ENCODE measurements at regions of chr10 and their contacts with region 1.

Region 1: DNA sequence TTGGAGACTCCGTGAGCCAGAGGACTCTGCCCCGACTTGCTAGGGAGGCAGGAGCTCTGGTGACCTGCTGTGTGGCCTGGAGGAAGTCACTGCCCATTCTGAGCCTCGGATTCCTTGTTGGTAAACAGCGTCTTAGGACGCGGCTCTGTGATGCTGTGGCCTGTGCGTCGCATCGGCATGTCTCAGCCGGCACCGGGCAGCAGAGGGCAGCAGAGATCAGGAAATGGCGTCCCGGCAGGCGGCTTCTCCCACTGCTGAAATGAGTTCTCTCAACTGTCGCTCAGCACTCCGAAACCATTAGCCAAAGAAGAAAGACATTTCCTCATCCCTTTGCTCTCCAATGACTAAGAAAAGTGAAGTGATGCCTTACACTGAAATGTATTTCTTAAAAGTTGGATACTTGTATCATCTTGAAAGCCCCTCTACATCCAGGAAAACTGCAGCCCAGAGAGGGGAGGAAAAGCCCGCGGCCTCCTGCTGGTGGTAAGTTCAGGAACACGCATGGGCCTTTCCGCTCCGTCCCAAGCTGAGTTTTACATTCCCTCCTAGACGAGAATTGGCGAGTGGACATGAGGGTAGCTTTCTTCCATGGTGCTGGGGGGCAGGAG is 91.7 kb downstream of the WDR11 start:
- DNase-seq: peak; percentile 44 to 57
- H3K4me3 ChIP-seq: no peak overlapping the region
- H3K27ac ChIP-seq: no peak overlapping the region
- H3K4me1 ChIP-seq: no peaks in the 10 kb centered on the region
- H3K27me3 ChIP-seq: peaks cover 38% of the 10 kb centered on the region
- CTCF ChIP-seq: peak; percentile 80

Region 2: DNA sequence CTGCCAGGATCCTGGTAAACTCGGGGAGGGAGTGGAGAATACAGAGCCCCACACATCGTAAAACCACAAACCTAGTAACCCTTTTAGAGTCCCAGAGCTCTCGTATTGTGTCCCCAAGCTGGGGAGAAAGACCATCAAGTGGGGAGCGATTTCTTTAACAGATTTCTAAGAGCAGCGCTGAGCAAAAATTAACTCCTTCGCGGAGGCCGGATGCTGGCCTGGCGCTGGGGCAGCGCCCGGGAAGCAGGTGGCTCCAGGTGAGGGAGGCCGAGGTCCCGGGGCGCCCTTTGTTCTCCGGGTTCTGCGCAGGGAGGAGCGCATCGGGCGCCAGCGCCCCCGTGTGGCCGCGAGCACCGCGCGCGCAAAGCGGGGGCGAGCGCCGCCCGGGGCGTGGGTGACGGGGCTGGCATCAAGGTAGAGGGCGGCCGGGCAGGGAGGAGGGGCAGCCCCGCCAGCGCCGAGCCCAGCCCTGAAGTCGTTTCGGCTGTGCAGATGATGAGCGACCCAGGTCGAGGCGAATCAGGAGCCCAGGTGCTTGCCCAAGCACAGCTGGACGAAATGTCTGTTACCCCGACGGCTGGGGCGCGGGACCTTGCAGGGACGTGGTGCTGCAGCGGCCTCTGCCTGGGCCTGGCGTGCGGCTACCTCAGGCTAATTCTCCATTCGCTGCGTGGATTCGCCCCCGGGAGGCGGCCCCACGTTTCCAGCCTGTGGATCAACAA is 665.7 kb after region 1 on chr10:
- CTCF ChIA-PET with region 1: no interaction called
- POLR2A ChIA-PET with region 1: no interaction called
- intact Hi-C with region 1: loop called (anchors 10 kb)
- DNase-seq: peak in 1 of 2 experiments; percentile 27
- H3K4me3 ChIP-seq: no peak overlapping the region
- H3K27ac ChIP-seq: no peak overlapping the region
- H3K4me1 ChIP-seq: no peaks in the 10 kb centered on the region
- H3K27me3 ChIP-seq: peaks cover 58% of the 10 kb centered on the region
- CTCF ChIP-seq: no peak; the same call in 1 of the 2 replicates

Region 3: GRCh38 chr10:121734589-121735045 is 791.7 kb after region 1 on chr10:
- CTCF ChIA-PET with region 1: interaction called, 4 read pairs
- POLR2A ChIA-PET with region 1: no interaction called
- intact Hi-C with region 1: loop called (anchors 2 kb)
- DNase-seq: no peak
- H3K4me3 ChIP-seq: no peak overlapping the region
- H3K27ac ChIP-seq: no peak overlapping the region
- H3K4me1 ChIP-seq: no peaks in the 10 kb centered on the region
- H3K27me3 ChIP-seq: peaks cover 17% of the 10 kb centered on the region; the same call in 1 of the 2 replicates
- CTCF ChIP-seq: peak; percentile 69

Region 4: DNA sequence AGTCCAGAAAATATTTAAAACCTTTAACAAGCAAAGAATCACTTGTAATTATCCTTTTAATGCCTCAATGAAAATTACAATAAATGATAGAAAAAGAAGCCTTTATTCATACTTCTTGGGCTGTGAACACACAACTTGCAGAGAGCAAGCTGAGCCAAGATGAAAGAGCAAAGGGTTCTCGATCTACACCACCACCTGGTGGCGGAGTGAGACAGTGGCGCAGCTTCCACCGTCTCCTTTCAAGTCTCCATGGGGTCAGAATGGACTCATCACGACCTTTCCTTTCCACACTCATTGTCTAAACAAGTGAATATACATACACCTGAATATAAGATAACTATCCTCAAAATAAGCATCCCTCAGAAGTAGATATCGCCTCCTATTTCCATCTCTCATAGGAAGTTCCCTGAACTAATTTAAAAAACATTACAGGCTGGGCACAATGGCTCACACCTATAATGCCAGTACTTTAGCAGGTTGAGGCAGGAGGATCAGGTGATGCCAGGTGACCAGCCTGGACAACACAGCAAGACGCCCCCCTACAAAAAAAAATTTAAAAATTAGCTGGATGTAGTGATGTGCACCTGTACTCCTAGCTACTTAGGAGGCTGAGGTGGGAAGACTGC is 944.2 kb after region 1 on chr10:
- CTCF ChIA-PET with region 1: no interaction called
- POLR2A ChIA-PET with region 1: no interaction called
- intact Hi-C with region 1: loop called (anchors 5 kb)
- DNase-seq: peak in 1 of 2 experiments; percentile 9
- H3K4me3 ChIP-seq: no peak overlapping the region
- H3K27ac ChIP-seq: no peak overlapping the region
- H3K4me1 ChIP-seq: no peaks in the 10 kb centered on the region
- H3K27me3 ChIP-seq: no peaks in the 10 kb centered on the region
- CTCF ChIP-seq: peak; percentile 54

Region 5: DNA sequence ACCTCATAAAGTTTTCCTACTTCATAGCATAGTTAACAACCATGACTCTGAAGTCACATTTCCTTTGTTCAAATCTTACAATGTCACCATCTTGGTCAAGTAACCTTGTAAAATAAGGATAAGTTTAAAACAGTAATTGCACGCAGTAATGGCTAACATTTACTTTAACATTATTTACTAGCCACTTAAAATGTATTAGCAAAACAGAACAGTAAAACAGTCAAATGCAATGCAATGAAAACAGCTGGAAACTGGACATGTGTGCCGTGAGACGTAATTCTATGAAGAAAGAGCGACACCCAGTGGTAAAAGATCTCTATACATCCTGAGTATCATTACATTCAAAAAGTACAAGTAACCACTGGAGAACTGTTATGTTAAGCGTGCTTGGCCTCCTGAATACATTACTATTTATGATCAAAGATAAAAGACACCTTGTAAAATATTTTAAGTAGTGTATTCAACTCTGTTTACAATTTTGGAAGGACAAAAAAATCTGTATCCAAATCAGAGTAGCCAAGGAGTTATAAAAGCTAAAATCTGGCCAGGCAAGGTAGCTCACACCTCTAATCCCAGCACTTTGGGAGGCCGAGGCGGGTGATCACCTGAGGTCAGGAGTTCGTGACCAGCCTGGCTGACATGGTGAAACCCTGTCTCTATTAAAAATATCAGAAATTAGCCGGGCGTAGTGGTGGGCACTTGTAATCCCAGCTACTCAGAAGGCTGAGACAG is 957.7 kb after region 1 on chr10:
- CTCF ChIA-PET with region 1: no interaction called
- POLR2A ChIA-PET with region 1: no interaction called
- intact Hi-C with region 1: loop called (anchors 2 kb)
- DNase-seq: no peak
- H3K4me3 ChIP-seq: no peak overlapping the region
- H3K27ac ChIP-seq: no peak overlapping the region
- H3K4me1 ChIP-seq: no peaks in the 10 kb centered on the region
- H3K27me3 ChIP-seq: no peaks in the 10 kb centered on the region
- CTCF ChIP-seq: peak; percentile 74